GM10248 (cell line): ENCODE measurements at regions of chr1 and their contacts with region 1.

Region 1: GRCh38 chr1:106957783-106958182 is 98.7 kb upstream of the PRMT6 start:
- DNase-seq: no peak
- CTCF ChIP-seq: peak; percentile 5

Region 2: DNA sequence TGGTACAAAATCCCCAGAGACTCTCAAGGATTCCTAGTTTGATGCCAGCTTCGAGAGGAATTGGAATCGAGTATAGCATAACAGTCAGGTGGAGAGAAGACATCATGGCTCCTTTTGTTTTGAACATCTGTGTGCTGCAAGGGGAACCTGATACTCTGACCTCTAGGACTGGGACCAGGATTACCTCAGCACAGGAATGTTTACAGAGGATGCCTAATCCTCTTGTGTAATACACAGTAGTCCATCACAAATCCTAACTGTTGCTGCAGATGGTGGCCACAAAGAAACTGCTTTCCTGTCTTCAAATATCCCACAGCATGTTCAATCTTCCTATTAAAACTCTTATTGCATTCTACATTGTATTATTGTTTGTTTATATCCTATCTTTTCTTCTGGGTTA is 13.1 kb before region 1 on chr1:
- CTCF ChIA-PET with region 1: interaction called, 12 read pairs
- POLR2A ChIA-PET with region 1: no interaction called
- DNase-seq: no peak
- CTCF ChIP-seq: no peak

Region 3: DNA sequence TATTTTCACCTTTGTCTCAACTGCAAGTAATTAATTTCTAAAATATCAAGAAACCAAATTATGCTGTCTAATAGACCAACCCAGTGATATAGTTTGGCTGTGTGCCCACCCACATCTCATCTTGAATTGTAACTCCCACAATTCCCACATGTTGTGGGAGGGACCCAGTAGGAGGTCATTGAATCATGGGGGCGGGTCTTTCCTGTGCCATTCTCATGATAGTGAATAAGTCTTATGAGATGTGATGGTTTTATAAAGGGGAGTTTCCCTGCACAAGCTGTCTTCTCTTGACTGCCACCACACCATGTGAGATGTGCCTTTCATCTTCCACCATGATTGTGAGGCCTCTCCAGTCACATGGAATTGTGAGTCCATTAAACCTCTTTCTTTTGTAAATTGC is 135.6 kb after region 1 on chr1:
- CTCF ChIA-PET with region 1: no interaction called
- POLR2A ChIA-PET with region 1: no interaction called
- DNase-seq: no peak
- CTCF ChIP-seq: no peak